ENCODE measurements at regions of chr5 and their contacts with region 1.

Region 1: GRCh38 chr5:108634617-108635288 is 112.9 kb upstream of the FER start:
- DNase-seq: no peak
- ATAC-seq: no peak

Region 2: GRCh38 chr5:108588323-108588722 is 46.4 kb before region 1 on chr5:
- intact Hi-C with region 1: no loop called
- DNase-seq: no peak
- ATAC-seq: no peak

Region 3: DNA sequence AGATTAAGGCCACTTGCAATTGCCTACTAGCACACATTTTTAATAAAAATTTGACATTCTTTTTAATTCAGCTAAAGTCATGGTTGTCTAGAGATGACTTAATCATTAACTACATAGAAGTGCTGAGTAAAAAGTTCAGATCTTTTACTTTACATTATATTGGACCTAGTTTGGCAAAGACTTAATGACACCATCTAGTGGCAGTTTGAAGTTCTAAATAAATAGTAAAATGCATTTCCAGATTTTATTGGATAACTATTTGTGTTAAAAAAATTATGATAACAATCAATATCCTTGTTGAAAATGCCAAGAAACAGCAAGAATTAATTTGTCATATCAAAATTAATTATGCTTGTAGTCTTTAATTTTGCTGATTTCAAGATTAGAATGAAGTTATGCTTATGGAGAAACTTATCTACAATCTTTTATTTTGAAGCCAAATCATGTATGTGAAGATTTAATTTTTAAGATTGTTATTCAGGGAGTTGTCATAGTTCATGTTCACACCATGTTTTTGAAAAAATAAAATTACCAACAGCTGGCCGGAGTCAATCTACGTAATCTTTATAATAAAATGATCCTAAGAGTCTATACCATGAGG is 844.6 kb after region 1 on chr5:
- intact Hi-C with region 1: loop called (anchors 10 kb)
- DNase-seq: no peak
- ATAC-seq: no peak

Measured in Right ventricle myocardium inferior (tissue), 1 donor.